ENCODE measurements at regions of chr2 and their contacts with region 1.

Region 1: DNA sequence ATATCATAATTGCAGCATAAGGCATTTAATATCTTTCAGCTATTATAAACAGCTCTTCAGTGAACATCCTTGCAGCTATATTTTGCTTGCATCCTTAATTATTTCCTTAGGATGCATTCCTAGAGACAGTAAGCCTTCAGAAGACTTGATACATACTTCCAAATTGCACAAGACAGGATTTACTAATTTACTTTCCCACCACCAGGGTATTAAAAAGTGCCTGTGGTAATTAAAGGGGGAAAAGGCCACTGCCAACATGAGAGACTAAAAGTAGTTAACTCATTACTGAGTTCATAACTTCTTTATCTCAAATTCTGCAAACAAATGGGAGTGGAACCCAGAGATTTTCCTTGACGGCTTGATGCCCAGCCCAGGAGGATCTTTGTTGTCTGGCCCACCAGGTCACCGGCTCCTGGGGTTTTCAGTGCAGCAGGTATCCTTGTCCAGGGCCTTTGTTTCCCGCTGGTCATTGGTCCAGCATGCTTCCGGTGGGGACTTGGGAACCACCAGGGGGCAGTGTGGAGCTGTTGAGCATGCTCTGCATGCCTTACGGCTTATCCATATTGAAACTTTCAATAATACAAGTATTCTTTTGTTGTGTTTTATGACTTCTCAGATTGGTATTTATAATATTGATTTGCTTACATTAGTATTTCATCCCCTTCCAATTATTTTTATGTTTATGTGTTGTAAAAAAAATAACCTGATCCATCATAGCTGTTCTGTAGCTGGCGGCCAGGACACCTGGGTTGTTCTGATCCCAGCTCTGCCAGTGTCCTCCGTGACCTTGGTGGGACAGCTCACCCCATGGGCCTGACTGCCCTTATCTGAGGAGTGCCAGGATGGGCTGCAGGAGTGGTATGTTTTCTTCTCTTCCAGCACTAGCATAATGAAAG is 61.4 kb downstream of the TGOLN2 start:
- DNase-seq: peak; percentile 88
- ATAC-seq: peak; percentile 89
- H3K4me3 Mint-ChIP-seq: no peak overlapping the region
- H3K27ac Mint-ChIP-seq: no peak overlapping the region
- H3K4me1 Mint-ChIP-seq: no peaks in the 10 kb centered on the region
- H3K27me3 Mint-ChIP-seq: no peaks in the 10 kb centered on the region

Region 2: GRCh38 chr2:85119900-85120299 is 146.5 kb before region 1 on chr2:
- CTCF ChIA-PET with region 1: no interaction called
- POLR2A ChIA-PET with region 1: no interaction called
- intact Hi-C with region 1: no loop called
- DNase-seq: no peak
- ATAC-seq: no peak
- H3K4me3 Mint-ChIP-seq: no peak overlapping the region
- H3K27ac Mint-ChIP-seq: no peak overlapping the region
- H3K4me1 Mint-ChIP-seq: no peaks in the 10 kb centered on the region
- H3K27me3 Mint-ChIP-seq: peaks cover 2% of the 10 kb centered on the region

Region 3: GRCh38 chr2:85221067-85221691 is 45.2 kb before region 1 on chr2:
- CTCF ChIA-PET with region 1: no interaction called
- POLR2A ChIA-PET with region 1: no interaction called
- intact Hi-C with region 1: no loop called
- DNase-seq: no peak
- ATAC-seq: no peak
- H3K4me3 Mint-ChIP-seq: no peak overlapping the region
- H3K27ac Mint-ChIP-seq: no peak overlapping the region
- H3K4me1 Mint-ChIP-seq: no peaks in the 10 kb centered on the region
- H3K27me3 Mint-ChIP-seq: peaks cover 15% of the 10 kb centered on the region

Region 4: DNA sequence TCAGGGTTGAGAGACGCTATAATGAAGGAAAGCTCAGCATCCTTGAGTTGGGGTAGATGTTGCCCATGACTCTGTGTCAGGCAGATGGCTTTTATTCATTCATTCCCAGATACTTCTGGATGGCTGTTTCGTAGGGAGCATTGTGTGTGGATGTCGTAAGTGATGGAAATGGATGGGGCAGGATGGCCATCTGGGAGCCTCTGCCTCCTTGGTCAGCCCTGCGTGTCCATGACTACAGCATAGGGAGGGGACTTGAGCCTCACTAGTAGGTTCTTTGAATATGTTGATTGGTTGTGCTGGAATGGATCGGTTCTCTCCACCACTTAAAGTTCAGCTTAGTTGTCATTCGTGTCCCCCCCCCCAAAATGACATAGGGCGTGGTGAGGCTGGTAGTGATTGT is 16.5 kb after region 1 on chr2:
- CTCF ChIA-PET with region 1: interaction called, 19 read pairs
- POLR2A ChIA-PET with region 1: no interaction called
- intact Hi-C with region 1: loop called (anchors 1 kb)
- DNase-seq: no peak
- ATAC-seq: no peak
- H3K4me3 Mint-ChIP-seq: no peak overlapping the region
- H3K27ac Mint-ChIP-seq: no peak overlapping the region
- H3K4me1 Mint-ChIP-seq: peaks cover 9% of the 10 kb centered on the region
- H3K27me3 Mint-ChIP-seq: no peaks in the 10 kb centered on the region

Region 5: DNA sequence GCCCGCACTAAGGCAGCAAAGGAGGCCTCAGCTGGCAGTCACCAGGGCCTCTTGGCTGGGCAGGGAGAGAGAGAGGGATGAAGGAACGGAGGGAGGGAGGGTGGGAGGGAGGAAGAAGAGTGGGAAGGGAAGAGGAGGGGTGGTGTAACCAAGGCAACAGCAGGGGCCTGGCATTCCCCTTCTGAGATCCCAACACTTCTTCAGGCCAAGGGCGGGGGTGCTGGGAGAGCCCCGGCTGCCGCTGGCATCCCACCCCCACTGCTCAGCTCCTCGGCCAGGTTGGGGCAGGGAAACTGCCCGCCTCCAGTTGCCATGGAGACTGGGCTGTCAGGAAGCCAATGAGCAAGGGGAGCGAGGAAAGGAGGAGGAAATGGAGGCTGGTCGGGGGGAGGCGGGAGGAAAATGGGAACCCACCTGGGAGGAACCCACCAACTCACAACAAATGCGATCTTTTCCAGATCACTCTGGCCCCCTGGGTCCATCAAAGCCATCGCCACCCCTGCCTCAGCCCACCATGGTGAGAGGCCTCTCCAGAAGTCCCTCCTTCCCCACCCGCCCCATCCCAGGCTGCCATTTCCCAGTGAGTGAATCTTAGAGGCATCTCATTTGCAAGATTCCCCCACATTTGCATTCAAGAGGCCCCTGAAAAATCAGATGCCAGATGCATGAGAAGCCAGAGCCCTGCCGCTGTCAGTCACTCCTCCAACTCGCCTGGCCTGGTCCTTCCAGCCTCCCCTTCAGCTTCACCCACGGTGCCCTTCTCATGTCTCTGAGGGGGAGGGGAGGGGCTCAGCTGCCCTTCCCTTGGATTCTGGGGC is 164.6 kb after region 1 on chr2:
- CTCF ChIA-PET with region 1: no interaction called
- POLR2A ChIA-PET with region 1: no interaction called
- intact Hi-C with region 1: no loop called
- DNase-seq: no peak
- ATAC-seq: no peak
- H3K4me3 Mint-ChIP-seq: no peak overlapping the region
- H3K27ac Mint-ChIP-seq: no peak overlapping the region
- H3K4me1 Mint-ChIP-seq: peaks cover 5% of the 10 kb centered on the region
- H3K27me3 Mint-ChIP-seq: no peaks in the 10 kb centered on the region